Tibial artery (tissue), 4 donors: ENCODE measurements at regions of chr4 and their contacts with region 1.

Region 1: DNA sequence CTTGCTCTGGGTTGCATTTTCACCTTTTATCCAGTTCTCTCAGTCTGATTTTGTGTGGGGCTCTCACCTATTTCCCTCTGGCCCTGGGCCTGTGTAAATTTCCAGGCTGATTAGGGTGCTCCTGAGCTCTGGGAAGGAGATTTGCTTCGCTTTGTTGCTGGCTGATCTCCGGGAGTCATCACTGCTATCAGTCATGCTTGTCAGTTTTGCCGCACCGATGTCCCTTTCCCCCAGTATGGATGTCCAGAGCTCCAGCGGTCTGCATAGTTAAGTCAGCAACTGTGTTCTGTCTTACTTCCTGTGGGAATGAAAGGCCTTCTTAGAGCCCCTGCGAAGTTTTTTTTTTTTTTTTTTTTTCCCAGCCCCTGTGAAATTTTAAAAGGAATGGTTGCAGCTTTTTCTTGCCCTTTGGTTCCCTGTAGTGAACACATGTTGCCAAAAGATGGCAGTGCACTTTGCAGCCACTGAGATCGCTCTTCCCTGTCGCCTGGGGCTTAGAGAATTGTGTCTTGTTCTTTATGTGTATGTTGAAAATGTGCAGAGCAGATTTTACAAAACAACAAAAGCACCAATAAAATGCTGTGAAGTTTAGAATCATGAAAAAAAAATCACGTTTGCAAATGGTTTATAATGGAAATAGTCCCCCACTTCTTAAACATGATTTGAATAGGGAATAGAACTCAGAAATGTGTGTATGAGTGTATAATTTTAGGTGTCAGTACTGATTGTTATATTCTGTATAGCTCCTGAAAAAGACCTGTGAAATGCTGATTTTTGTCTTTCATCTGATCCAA is 109.1 kb upstream of the SLC4A4 start:
- DNase-seq: peak in 1 of 2 donors; percentile 29
- H3K4me3 ChIP-seq: no peak overlapping the region
- H3K27ac ChIP-seq: peak overlapping the region; percentile 78 to 87
- H3K4me1 ChIP-seq: peaks cover 0 to 40% (median 14%) of the 10 kb centered on the region in 4 donors
- H3K27me3 ChIP-seq: no peaks in the 10 kb centered on the region
- CTCF ChIP-seq: peak; percentile 56 to 70

Region 2: GRCh38 chr4:70721747-70722146 is 507.9 kb before region 1 on chr4 and contains the start of gene RUFY3:
- intact Hi-C with region 1: loop called (anchors 5 kb)
- DNase-seq: peak; percentile 59 to 73
- H3K4me3 ChIP-seq: peak within 1 kb of the TSS; percentile 53 to 55
- H3K27ac ChIP-seq: peak within 1 kb of the TSS; percentile 73 to 76
- H3K4me1 ChIP-seq: peaks cover 0 to 34% (median 3%) of the 10 kb centered on the region in 4 donors
- H3K27me3 ChIP-seq: no peaks in the 10 kb centered on the region
- CTCF ChIP-seq: no peak

Region 3: GRCh38 chr4:71184195-71184781 is 45.4 kb before region 1 on chr4:
- intact Hi-C with region 1: loop called (anchors 10 kb)
- DNase-seq: peak in 1 of 2 donors; percentile 37
- H3K4me3 ChIP-seq: no peak overlapping the region
- H3K27ac ChIP-seq: no peak overlapping the region
- H3K4me1 ChIP-seq: peaks cover 0 to 29% (median 6%) of the 10 kb centered on the region in 4 donors
- H3K27me3 ChIP-seq: no peaks in the 10 kb centered on the region
- CTCF ChIP-seq: peak; percentile 47 to 62

Region 4: DNA sequence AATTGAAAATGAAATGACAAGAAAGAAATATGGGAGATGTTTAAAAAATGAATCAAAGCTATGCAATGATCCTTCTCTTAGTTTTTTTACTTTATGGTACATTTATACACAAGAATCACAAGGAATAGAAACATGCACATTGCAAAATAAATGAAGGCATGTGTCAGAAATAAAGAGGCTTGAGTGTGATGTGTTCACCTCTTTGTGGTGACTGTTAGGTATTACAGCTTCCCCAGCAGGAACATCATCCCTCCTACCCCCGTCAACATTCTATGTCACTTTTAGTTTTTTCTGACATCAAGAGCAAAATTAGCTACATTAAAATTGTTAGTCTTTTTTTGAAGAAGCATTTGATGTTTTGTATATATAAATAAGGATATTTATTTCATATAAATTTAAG is 323.9 kb after region 1 on chr4:
- intact Hi-C with region 1: loop called (anchors 10 kb)
- DNase-seq: no peak
- H3K4me3 ChIP-seq: no peak overlapping the region
- H3K27ac ChIP-seq: no peak overlapping the region
- H3K4me1 ChIP-seq: peaks cover 0 to 6% (median 0%) of the 10 kb centered on the region in 4 donors
- H3K27me3 ChIP-seq: no peaks in the 10 kb centered on the region
- CTCF ChIP-seq: peak; percentile 46 to 59

Region 5: DNA sequence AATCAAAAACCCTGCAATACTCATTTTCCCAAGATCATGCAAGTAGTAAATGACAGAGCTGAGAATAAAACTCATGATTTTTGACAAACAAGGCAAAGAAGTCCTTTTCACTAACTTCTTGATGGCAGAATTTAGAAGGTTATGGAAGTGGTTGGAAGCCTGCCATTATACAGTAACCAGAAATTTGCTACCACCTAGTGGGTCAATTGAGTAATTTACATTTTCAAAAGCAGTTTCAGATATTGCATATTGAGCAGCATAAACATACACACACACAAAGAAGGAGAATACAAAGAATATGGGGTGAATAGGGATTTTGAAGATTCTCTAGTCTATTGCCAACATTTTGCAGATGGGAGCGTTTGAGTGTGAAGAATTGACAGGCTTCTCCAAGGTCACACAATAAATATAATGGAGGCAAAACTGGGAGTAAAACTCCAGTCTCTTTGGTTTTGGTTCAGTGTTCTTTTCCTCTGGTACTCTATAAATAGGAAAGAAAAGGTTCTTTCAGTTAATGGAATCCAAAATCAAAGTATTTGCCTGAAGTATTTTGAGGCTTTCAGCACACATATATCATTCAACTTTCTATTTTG is 484.0 kb after region 1 on chr4:
- intact Hi-C with region 1: loop called (anchors 5 kb)
- DNase-seq: no peak
- H3K4me3 ChIP-seq: no peak overlapping the region
- H3K27ac ChIP-seq: no peak overlapping the region
- H3K4me1 ChIP-seq: no peaks in the 10 kb centered on the region
- H3K27me3 ChIP-seq: no peaks in the 10 kb centered on the region
- CTCF ChIP-seq: peak; percentile 53 to 70